Activated CD4-positive, alpha-beta T cell treated with anti-CD3 and anti-CD28 coated beads, Interleukin-2, amount 10 ng/mL, durations not matched to agents 24 days and 14 days (primary cell): ENCODE measurements at regions of chr7 and their contacts with region 1.

Region 1: GRCh38 chr7:50266635-50267386 is 37.7 kb upstream of the IKZF1 start:
- DNase-seq: peak; percentile 95
- H3K4me3 Mint-ChIP-seq: peak overlapping the region; percentile 86
- H3K27ac Mint-ChIP-seq: peak overlapping the region; percentile 95
- H3K4me1 Mint-ChIP-seq: peaks cover 84% of the 10 kb centered on the region
- H3K27me3 Mint-ChIP-seq: no peaks in the 10 kb centered on the region

Region 2: GRCh38 chr7:50047716-50048115 is 219.1 kb before region 1 on chr7:
- intact Hi-C with region 1: no loop called
- DNase-seq: no peak
- H3K4me3 Mint-ChIP-seq: no peak overlapping the region
- H3K27ac Mint-ChIP-seq: no peak overlapping the region
- H3K4me1 Mint-ChIP-seq: no peaks in the 10 kb centered on the region
- H3K27me3 Mint-ChIP-seq: peaks cover 10% of the 10 kb centered on the region

Region 3: GRCh38 chr7:50147951-50148808 is 118.6 kb before region 1 on chr7:
- intact Hi-C with region 1: loop called (anchors 1 kb)
- DNase-seq: peak; percentile 81
- H3K4me3 Mint-ChIP-seq: peak overlapping the region; percentile 40
- H3K27ac Mint-ChIP-seq: peak overlapping the region; percentile 81
- H3K4me1 Mint-ChIP-seq: peaks cover 61% of the 10 kb centered on the region
- H3K27me3 Mint-ChIP-seq: no peaks in the 10 kb centered on the region

Region 4: GRCh38 chr7:50246551-50246950 is 20.3 kb before region 1 on chr7:
- intact Hi-C with region 1: loop called (anchors 2 kb)
- DNase-seq: no peak
- H3K4me3 Mint-ChIP-seq: no peak overlapping the region
- H3K27ac Mint-ChIP-seq: no peak overlapping the region
- H3K4me1 Mint-ChIP-seq: peaks cover 3% of the 10 kb centered on the region
- H3K27me3 Mint-ChIP-seq: no peaks in the 10 kb centered on the region

Region 5: GRCh38 chr7:50304158-50304910 is 37.5 kb after region 1 on chr7 and contains the start of gene IKZF1:
- intact Hi-C with region 1: loop called (anchors 1 kb)
- DNase-seq: peak; percentile 87
- H3K4me3 Mint-ChIP-seq: peak within 1 kb of the TSS; percentile 95
- H3K27ac Mint-ChIP-seq: peak within 1 kb of the TSS; percentile 97
- H3K4me1 Mint-ChIP-seq: peaks cover 39% of the 10 kb centered on the region
- H3K27me3 Mint-ChIP-seq: peaks cover 4% of the 10 kb centered on the region
- total RNA-seq, gene IKZF1: 282 and 292 TPM in 2 replicates

Region 6: GRCh38 chr7:50335795-50336754 is 69.3 kb after region 1 on chr7:
- intact Hi-C with region 1: loop called (anchors 2 kb)
- DNase-seq: peak; percentile 92
- H3K4me3 Mint-ChIP-seq: no peak overlapping the region
- H3K27ac Mint-ChIP-seq: no peak overlapping the region
- H3K4me1 Mint-ChIP-seq: peaks cover 63% of the 10 kb centered on the region
- H3K27me3 Mint-ChIP-seq: no peaks in the 10 kb centered on the region

Region 7: GRCh38 chr7:50454968-50455367 is 188.2 kb after region 1 on chr7:
- intact Hi-C with region 1: no loop called
- DNase-seq: no peak
- H3K4me3 Mint-ChIP-seq: no peak overlapping the region
- H3K27ac Mint-ChIP-seq: no peak overlapping the region
- H3K4me1 Mint-ChIP-seq: peaks cover 6% of the 10 kb centered on the region
- H3K27me3 Mint-ChIP-seq: peaks cover 19% of the 10 kb centered on the region